Kidney (tissue), 22 donors: ENCODE measurements at regions of chr5 and their contacts with region 1.

Region 1: DNA sequence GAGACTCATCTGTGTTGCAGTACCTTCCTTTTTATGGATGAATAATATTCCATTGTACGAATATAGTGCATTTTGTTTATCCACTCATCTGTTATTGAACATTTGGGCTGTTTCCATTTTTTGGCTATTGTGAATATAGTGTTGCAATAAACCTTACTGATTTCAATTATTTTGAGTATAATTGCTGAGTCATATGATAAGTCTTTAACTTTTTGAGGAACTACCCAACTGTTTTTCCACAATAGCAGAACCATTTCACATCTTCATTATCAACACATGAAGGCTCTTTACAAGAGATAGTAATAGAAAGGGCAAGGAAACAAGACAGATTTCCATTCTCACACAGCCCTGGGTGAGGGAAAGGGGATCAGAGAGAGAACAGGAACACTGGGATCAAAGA is 329.2 kb downstream of the RAB3C start:
- DNase-seq: no peak
- H3K4me3 ChIP-seq: no peak overlapping the region
- H3K27ac ChIP-seq: no peak overlapping the region
- H3K4me1 ChIP-seq: peaks cover 0 to 2% (median 0%) of the 10 kb centered on the region in 3 donors
- H3K27me3 ChIP-seq: no peaks in the 10 kb centered on the region
- CTCF ChIP-seq: no peak

Region 2: DNA sequence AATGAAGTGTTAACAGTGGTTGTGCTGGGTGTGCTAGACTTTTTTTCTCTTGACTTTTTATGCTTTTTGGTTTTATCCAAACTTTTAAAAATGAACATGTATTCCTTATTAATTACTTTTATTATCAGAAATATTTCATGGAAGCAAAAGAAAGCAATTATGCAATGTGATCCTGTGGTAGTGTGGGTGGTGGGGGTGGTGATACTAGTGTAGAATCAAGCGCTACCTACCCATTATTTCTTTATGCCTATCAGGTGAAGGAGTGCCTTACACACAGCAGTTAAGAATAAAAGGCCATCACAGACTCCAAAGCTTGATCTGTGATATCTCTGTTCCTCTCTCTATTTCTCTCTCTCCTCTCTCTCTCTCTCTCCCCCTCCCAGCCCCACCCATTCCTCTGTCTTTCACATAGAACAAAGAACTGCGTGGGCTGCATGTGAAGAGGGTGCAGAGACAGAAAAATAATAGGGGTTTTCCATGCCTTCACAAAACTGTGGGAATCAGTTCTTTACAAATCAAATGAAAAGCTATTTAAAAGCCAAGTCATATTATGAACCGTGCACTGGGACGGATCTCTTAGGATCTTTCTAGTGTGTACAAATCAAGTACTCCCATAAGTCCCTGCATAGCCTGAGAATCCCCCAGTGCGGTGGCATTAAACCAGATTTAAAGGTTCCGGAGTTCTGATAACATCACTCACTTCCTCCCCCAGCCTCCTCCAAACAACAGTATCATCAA is 21.9 kb after region 1 on chr5:
- intact Hi-C with region 1: loop called (anchors 2 kb)
- DNase-seq: no peak
- H3K4me3 ChIP-seq: no peak overlapping the region
- H3K27ac ChIP-seq: no peak overlapping the region
- H3K4me1 ChIP-seq: no peaks in the 10 kb centered on the region
- H3K27me3 ChIP-seq: no peaks in the 10 kb centered on the region
- CTCF ChIP-seq: no peak

Region 3: GRCh38 chr5:59819806-59820205 is 907.7 kb after region 1 on chr5:
- intact Hi-C with region 1: no loop called
- DNase-seq: no peak
- H3K4me3 ChIP-seq: no peak overlapping the region
- H3K27ac ChIP-seq: no peak overlapping the region
- H3K4me1 ChIP-seq: no peaks in the 10 kb centered on the region
- H3K27me3 ChIP-seq: no peaks in the 10 kb centered on the region
- CTCF ChIP-seq: no peak